CD4-positive, alpha-beta memory T cell (primary cell): ENCODE measurements at regions of chr1 and their contacts with region 1.

Region 1: GRCh38 chr1:78617615-78618026 is 2.6 kb upstream of the IFI44L start:
- DNase-seq: peak; percentile 73 to 80 (median 78)
- H3K4me3 ChIP-seq: no peak overlapping the region
- H3K4me3 Mint-ChIP-seq: peak overlapping the region in 6 of 8 donors; percentile 27 to 74 (median 40)
- H3K27ac ChIP-seq: no peak overlapping the region
- H3K27ac Mint-ChIP-seq: peak overlapping the region in 6 of 7 donors; percentile 24 to 88 (median 70)
- H3K4me1 ChIP-seq: peaks cover 43% of the 10 kb centered on the region
- H3K4me1 Mint-ChIP-seq: peaks cover 33 to 45% (median 39%) of the 10 kb centered on the region in 4 donors
- H3K27me3 ChIP-seq: no peaks in the 10 kb centered on the region
- H3K27me3 Mint-ChIP-seq: no peaks in the 10 kb centered on the region

Region 2: GRCh38 chr1:78132174-78132947 is 485.3 kb before region 1 on chr1:
- CTCF ChIA-PET with region 1: interaction called, 10 read pairs
- POLR2A ChIA-PET with region 1: no interaction called
- intact Hi-C with region 1: no loop called
- DNase-seq: no peak
- H3K4me3 ChIP-seq: no peak overlapping the region
- H3K4me3 Mint-ChIP-seq: no peak overlapping the region
- H3K27ac ChIP-seq: no peak overlapping the region
- H3K27ac Mint-ChIP-seq: no peak overlapping the region
- H3K4me1 ChIP-seq: no peaks in the 10 kb centered on the region
- H3K4me1 Mint-ChIP-seq: no peaks in the 10 kb centered on the region
- H3K27me3 ChIP-seq: no peaks in the 10 kb centered on the region
- H3K27me3 Mint-ChIP-seq: no peaks in the 10 kb centered on the region

Region 3: DNA sequence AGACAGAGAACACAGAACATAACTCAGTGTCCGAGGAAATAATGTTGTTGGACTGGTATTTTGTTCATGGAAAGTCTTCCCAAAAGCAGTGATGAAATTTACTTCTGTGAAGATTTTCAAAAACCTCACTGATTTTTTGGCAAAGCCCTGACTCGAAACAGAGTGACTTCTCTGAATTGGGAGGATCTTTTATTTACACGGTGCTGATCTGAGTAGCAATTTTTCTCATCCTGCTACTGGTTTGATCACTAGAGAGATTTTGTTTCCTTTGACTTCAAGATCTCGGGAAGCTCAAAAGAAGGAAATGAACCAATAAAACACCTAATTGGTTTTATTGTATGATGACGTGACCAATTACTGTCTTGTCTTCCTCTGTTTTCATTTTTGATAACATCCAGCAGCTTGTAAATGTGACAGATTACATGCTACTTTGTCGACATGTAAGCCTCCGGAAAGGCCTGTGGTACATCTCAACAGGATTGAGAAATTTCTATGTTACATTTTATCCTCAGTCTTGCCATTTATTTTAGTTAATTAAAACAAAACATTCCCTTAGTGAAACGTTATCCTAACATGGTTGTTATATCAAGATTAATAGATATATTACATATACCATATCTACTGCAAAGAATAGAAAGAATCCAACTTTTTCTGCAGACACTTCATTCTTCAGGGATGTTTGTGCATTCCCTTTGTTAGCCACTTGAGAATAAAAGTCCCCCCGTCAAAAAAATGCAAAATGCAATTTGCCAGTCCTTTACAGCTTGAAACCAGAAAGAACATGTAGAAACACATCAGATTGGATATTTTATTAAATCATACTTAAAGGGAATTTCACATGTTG is 40.1 kb before region 1 on chr1:
- CTCF ChIA-PET with region 1: no interaction called
- POLR2A ChIA-PET with region 1: no interaction called
- intact Hi-C with region 1: no loop called
- DNase-seq: no peak
- H3K4me3 ChIP-seq: no peak overlapping the region
- H3K4me3 Mint-ChIP-seq: no peak overlapping the region
- H3K27ac ChIP-seq: no peak overlapping the region
- H3K27ac Mint-ChIP-seq: no peak overlapping the region
- H3K4me1 ChIP-seq: no peaks in the 10 kb centered on the region
- H3K4me1 Mint-ChIP-seq: no peaks in the 10 kb centered on the region
- H3K27me3 ChIP-seq: no peaks in the 10 kb centered on the region
- H3K27me3 Mint-ChIP-seq: no peaks in the 10 kb centered on the region

Region 4: GRCh38 chr1:78649628-78650027 is 32.0 kb after region 1 on chr1 and contains the start of gene IFI44:
- CTCF ChIA-PET with region 1: interaction called, 29 read pairs
- POLR2A ChIA-PET with region 1: interaction called, 22 read pairs
- intact Hi-C with region 1: loop called (anchors 1 kb)
- DNase-seq: peak; percentile 75 to 84 (median 78)
- H3K4me3 ChIP-seq: peak within 1 kb of the TSS; percentile 68 to 73
- H3K4me3 Mint-ChIP-seq: peak within 1 kb of the TSS; percentile 90 to 97 (median 93)
- H3K27ac ChIP-seq: peak within 1 kb of the TSS; percentile 66
- H3K27ac Mint-ChIP-seq: peak within 1 kb of the TSS; percentile 88 to 97 (median 95)
- H3K4me1 ChIP-seq: peaks cover 63% of the 10 kb centered on the region
- H3K4me1 Mint-ChIP-seq: peaks cover 46 to 88% (median 69%) of the 10 kb centered on the region in 4 donors
- H3K27me3 ChIP-seq: no peaks in the 10 kb centered on the region
- H3K27me3 Mint-ChIP-seq: no peaks in the 10 kb centered on the region
- total RNA-seq, gene IFI44: 45.6 to 49.4 TPM

Region 5: DNA sequence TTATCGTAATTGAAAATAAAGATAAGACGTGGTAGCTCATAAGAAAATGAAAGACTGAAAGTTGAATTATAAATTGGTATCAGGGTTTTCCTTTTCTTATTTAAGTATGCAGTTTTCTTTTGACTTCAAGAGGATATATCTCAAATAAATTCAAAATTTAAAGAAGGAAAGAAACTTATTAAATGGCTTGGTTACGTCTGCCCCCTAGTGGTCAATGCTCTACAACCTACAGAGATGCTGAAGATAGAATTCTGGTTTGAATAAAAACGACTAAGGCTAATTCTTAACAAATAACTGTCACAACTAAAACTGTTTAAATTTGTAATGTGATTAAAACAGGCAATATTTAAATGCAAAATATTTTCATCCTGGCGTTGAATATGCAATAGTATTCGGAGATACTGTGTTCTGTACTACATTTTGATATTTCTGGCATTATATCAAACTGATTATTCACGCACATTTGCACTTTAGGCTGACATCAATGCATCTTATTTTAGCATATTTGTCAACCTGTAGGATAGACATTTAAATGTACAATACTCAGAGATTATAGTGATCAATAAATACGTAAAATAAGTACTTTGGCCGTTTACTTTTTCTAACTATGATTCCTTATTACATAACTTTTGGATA is 58.8 kb after region 1 on chr1:
- CTCF ChIA-PET with region 1: interaction called, 107 read pairs
- POLR2A ChIA-PET with region 1: interaction called, 5 read pairs
- intact Hi-C with region 1: loop called (anchors 1 kb)
- DNase-seq: peak; percentile 48 to 64 (median 63)
- H3K4me3 ChIP-seq: no peak overlapping the region
- H3K4me3 Mint-ChIP-seq: no peak overlapping the region
- H3K27ac ChIP-seq: no peak overlapping the region
- H3K27ac Mint-ChIP-seq: no peak overlapping the region
- H3K4me1 ChIP-seq: no peaks in the 10 kb centered on the region
- H3K4me1 Mint-ChIP-seq: peaks cover 0 to 11% (median 7%) of the 10 kb centered on the region in 4 donors
- H3K27me3 ChIP-seq: no peaks in the 10 kb centered on the region
- H3K27me3 Mint-ChIP-seq: peaks cover 1 to 7% of the 10 kb centered on the region in 2 donors

Region 6: DNA sequence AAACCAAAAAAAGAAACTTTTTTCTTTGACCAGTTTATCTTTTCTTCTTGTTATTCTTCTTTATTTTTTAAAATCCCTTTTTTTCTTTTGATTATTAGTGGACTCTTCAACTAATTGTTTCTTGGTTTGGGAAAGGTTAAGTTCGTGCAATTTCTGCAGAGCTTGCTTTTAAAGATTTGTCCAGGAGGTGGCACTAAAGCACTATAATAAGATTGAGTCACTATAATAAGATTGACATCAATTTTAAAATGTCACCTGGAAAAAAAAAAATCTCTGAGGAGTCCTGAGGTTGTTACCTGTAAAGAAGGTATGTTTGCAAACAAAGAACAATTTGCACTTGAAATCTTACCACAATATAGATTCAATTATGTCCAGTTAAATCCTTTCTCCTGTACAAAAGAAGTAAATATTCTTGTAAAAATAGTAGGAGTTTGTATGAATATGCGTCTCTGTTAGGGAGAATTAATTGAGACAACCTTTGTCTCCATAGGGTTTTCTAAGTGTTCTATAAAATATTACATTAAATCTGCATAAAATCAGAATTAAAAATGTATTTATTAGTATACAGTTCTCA is 222.2 kb after region 1 on chr1:
- CTCF ChIA-PET with region 1: no interaction called
- POLR2A ChIA-PET with region 1: no interaction called
- intact Hi-C with region 1: loop called (anchors 10 kb)
- DNase-seq: peak in 4 of 5 donors; percentile 25 to 44 (median 29)
- H3K4me3 ChIP-seq: no peak overlapping the region
- H3K4me3 Mint-ChIP-seq: no peak overlapping the region
- H3K27ac ChIP-seq: no peak overlapping the region
- H3K27ac Mint-ChIP-seq: no peak overlapping the region
- H3K4me1 ChIP-seq: peaks cover 7% of the 10 kb centered on the region
- H3K4me1 Mint-ChIP-seq: peaks cover 6 to 15% (median 13%) of the 10 kb centered on the region in 4 donors
- H3K27me3 ChIP-seq: no peaks in the 10 kb centered on the region
- H3K27me3 Mint-ChIP-seq: no peaks in the 10 kb centered on the region

Region 7: DNA sequence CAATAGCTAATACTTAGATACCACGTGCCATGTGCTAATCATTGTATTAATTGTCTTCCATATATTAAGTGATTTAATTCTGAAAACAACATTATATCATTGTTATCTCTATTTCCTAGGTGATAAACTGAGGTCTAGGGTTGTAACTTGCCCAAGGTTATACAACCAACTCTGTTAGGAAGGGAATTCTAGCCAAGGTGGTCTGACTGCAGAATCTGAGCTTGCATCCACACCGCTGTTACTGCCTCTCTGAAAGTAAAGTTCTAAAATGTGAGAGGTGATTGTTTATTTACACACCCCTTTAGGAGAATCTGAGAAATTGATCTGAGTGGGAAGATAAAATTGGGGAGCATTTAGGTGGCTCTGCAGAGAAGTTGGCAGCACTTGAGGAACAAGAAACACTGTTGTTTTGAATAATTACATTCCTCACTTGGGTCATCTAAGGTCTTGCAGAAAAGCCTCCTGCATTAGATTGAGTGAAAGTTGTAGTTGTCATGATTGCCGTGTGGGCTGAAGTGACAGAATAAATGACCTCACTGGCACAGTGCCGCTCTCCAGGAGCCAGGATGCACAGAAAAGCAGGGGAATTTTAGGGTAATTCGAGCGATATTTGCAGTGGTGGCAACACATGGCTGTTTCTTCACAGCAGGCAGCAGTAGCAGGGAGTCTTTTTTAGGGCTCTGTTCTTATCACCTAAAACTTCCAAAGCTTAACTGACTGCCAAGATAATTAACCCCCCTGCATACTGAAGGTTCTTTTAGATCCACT is 267.2 kb after region 1 on chr1:
- CTCF ChIA-PET with region 1: no interaction called
- POLR2A ChIA-PET with region 1: no interaction called
- intact Hi-C with region 1: no loop called
- DNase-seq: no peak
- H3K4me3 ChIP-seq: no peak overlapping the region
- H3K4me3 Mint-ChIP-seq: no peak overlapping the region
- H3K27ac ChIP-seq: no peak overlapping the region
- H3K27ac Mint-ChIP-seq: no peak overlapping the region
- H3K4me1 ChIP-seq: no peaks in the 10 kb centered on the region
- H3K4me1 Mint-ChIP-seq: no peaks in the 10 kb centered on the region
- H3K27me3 ChIP-seq: no peaks in the 10 kb centered on the region
- H3K27me3 Mint-ChIP-seq: peaks cover 0 to 1% of the 10 kb centered on the region in 2 donors